ENCODE measurements at regions of chr16 and their contacts with region 1.

Region 1: DNA sequence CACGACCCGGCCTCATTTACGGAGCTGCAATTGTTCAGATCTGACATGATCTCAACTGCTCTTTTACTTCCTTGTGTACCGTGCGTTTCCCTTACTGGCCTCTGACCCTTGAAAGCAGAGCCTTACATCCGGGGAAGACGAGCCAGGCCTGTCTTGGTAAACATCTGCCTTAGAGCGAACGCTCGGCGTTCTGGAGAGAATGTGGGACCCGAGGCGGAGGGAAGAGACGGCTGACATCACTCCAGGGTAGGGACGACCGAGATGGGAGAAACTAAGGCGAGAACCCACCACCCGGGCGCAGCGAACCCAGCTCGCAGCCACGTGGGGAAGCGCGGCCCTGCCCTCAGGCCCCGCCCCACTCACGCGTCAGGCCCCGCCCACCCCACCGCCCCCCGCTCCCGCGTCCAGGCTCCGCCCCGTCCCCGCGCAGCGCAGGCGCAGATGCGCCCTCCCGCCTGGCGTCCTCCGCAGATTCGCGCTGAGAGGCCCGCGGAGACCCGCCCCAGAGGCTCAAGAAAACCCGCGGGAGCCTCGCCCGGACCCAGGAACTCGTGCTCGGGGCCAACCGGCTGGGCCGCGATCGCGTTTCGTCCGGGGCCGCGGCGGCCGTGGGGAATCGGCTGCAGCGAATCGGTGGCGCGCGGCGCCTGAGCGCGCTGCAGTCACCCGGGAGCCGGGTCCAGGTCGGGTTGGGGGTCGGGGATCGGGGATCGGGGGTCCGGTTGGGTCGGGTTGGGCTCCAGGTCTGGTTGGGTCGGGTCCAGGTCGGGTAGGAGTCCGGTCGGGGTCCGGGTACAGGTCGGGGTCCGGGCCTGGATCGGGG is at the start of gene TELO2:
- DNase-seq: peak; percentile 86
- ATAC-seq: peak; percentile 92
- H3K4me3 Mint-ChIP-seq: peak within 1 kb of the TSS; percentile 97
- H3K27ac Mint-ChIP-seq: peak within 1 kb of the TSS; percentile 100
- H3K4me1 Mint-ChIP-seq: peaks cover 18% of the 10 kb centered on the region
- H3K27me3 Mint-ChIP-seq: no peaks in the 10 kb centered on the region
- CTCF ChIP-seq: no peak
- total RNA-seq, gene TELO2: 72.9 and 78.8 TPM in 2 replicates

Region 2: GRCh38 chr16:728131-728889 is 764.8 kb before region 1 on chr16:
- CTCF ChIA-PET with region 1: no interaction called
- POLR2A ChIA-PET with region 1: no interaction called
- intact Hi-C with region 1: no loop called
- DNase-seq: peak; percentile 71
- ATAC-seq: peak; percentile 66
- H3K4me3 Mint-ChIP-seq: peak overlapping the region; percentile 69
- H3K27ac Mint-ChIP-seq: no peak overlapping the region
- H3K4me1 Mint-ChIP-seq: peaks cover 4% of the 10 kb centered on the region
- H3K27me3 Mint-ChIP-seq: no peaks in the 10 kb centered on the region
- CTCF ChIP-seq: no peak

Region 3: DNA sequence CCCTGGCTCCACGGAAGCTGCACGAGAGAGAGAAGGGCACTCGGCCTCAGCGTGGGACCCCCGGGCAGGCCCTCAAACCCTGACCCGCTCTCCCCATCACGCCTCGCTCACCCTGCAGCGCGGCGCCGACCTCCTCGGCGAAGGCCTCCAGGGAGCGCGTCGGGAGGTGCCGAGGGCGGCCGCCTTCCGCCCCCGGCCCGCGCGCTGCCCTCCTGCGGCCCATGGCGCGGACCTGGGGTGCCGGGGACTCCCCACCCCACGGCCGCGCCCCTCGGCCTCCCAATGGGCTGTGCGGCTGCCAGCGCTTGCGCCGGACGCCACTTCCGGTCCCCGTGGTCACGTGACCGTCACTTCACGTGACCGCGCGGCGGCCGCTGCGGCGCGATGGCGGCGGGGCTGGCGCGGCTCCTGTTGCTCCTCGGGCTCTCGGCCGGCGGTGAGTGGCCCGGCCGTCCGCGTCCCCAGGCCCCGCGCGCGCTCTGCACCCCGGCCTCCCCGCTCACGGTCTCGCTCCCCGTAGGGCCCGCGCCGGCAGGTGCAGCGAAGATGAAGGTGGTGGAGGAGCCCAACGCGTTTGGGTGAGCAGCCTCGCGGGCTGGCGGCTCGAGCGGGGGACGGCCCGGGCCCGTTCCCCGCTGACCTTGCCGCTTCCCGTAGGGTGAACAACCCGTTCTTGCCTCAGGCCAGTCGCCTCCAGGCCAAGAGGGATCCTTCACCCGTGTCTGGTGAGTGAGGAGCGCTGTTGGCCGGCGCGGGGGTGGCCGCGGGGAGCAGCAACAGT is 141.4 kb before region 1 on chr16 and contains the starts of genes GNPTG and TSR3:
- CTCF ChIA-PET with region 1: no interaction called
- POLR2A ChIA-PET with region 1: no interaction called
- intact Hi-C with region 1: no loop called
- DNase-seq: peak; percentile 92
- ATAC-seq: peak; percentile 93
- H3K4me3 Mint-ChIP-seq: peak within 1 kb of the TSS; percentile 85
- H3K27ac Mint-ChIP-seq: peak within 1 kb of the TSS; percentile 77
- H3K4me1 Mint-ChIP-seq: peaks cover 30% of the 10 kb centered on the region
- H3K27me3 Mint-ChIP-seq: no peaks in the 10 kb centered on the region
- CTCF ChIP-seq: no peak
- total RNA-seq, gene GNPTG: 36.3 and 40.2 TPM in 2 replicates
- total RNA-seq, gene TSR3: 45.3 and 49.0 TPM in 2 replicates

Region 4: GRCh38 chr16:1428511-1428910 is 64.6 kb before region 1 on chr16:
- CTCF ChIA-PET with region 1: no interaction called
- POLR2A ChIA-PET with region 1: interaction called, 16 read pairs
- intact Hi-C with region 1: no loop called
- DNase-seq: peak; percentile 62
- ATAC-seq: peak; percentile 93
- H3K4me3 Mint-ChIP-seq: no peak overlapping the region
- H3K27ac Mint-ChIP-seq: no peak overlapping the region
- H3K4me1 Mint-ChIP-seq: peaks cover 4% of the 10 kb centered on the region
- H3K27me3 Mint-ChIP-seq: no peaks in the 10 kb centered on the region
- CTCF ChIP-seq: no peak

Region 5: GRCh38 chr16:1443403-1443973 is 49.6 kb before region 1 on chr16:
- CTCF ChIA-PET with region 1: no interaction called
- POLR2A ChIA-PET with region 1: interaction called, 11 read pairs
- intact Hi-C with region 1: no loop called
- DNase-seq: no peak
- ATAC-seq: no peak
- H3K4me3 Mint-ChIP-seq: no peak overlapping the region
- H3K27ac Mint-ChIP-seq: no peak overlapping the region
- H3K4me1 Mint-ChIP-seq: peaks cover 7% of the 10 kb centered on the region
- H3K27me3 Mint-ChIP-seq: no peaks in the 10 kb centered on the region
- CTCF ChIP-seq: no peak

Region 6: GRCh38 chr16:1458336-1458976 is 34.7 kb before region 1 on chr16:
- CTCF ChIA-PET with region 1: no interaction called
- POLR2A ChIA-PET with region 1: interaction called, 52 read pairs
- intact Hi-C with region 1: loop called (anchors 1 kb)
- DNase-seq: no peak
- ATAC-seq: peak; percentile 72
- H3K4me3 Mint-ChIP-seq: peak overlapping the region; percentile 76
- H3K27ac Mint-ChIP-seq: peak overlapping the region; percentile 99
- H3K4me1 Mint-ChIP-seq: peaks cover 26% of the 10 kb centered on the region
- H3K27me3 Mint-ChIP-seq: no peaks in the 10 kb centered on the region
- CTCF ChIP-seq: no peak

Region 7: DNA sequence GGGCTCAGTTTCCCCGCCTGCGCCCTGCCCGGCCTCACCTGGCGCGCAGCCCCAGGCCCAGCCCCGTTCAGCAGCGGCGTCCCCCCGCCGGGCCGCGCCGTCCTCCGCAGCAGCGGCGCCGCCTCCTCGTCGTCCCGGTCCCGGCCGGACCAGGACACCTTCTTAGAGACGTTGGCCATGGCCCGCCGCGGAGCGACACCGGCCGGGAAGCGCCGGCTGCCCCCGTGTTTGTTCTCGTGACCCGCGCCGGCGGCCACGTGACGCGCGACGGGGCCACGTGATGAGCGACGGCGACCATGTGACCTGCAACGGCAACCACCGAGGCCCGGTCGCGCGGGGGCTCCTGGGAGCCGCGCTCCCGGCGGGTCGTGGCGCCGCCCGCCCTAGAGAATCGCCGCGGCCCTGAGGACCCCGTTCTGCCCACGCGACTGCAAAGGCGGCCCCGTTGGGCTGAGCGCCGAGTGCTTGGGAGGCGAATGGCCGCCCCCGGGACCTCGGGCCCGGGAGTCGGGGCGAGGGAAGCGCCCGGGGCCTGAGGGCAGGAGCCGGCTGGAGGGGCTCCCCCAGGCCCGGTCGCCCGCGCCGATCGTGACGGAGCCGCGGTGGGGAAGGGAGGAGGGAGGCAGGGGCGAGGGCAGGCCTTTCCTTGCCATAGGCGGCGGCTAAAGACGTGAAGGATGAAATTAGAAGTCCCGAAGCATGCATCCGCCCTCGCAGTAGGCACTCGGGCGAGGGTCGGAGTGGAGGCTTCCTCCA is 18.2 kb before region 1 on chr16 and contains the start of gene CLCN7:
- CTCF ChIA-PET with region 1: no interaction called
- POLR2A ChIA-PET with region 1: interaction called, 33 read pairs
- intact Hi-C with region 1: loop called (anchors 1 kb)
- DNase-seq: peak; percentile 91
- ATAC-seq: peak; percentile 84
- H3K4me3 Mint-ChIP-seq: peak within 1 kb of the TSS; percentile 89
- H3K27ac Mint-ChIP-seq: peak within 1 kb of the TSS; percentile 92
- H3K4me1 Mint-ChIP-seq: peaks cover 63% of the 10 kb centered on the region
- H3K27me3 Mint-ChIP-seq: no peaks in the 10 kb centered on the region
- CTCF ChIP-seq: no peak
- total RNA-seq, gene CLCN7: 127 and 144 TPM in 2 replicates